ENCODE measurements at regions of chr1 and their contacts with region 1.

Region 1: GRCh38 chr1:205920159-205920558 is 23.1 kb downstream of the SLC26A9 start:
- DNase-seq: peak; percentile 34
- H3K4me3 ChIP-seq: no peak overlapping the region
- H3K27ac ChIP-seq: no peak overlapping the region
- H3K4me1 ChIP-seq: no peaks in the 10 kb centered on the region
- H3K27me3 ChIP-seq: no peaks in the 10 kb centered on the region

Region 2: GRCh38 chr1:205965036-205965884 is 45.1 kb after region 1 on chr1:
- in situ Hi-C with region 1: loop called (anchors 5 kb)
- DNase-seq: no peak
- H3K4me3 ChIP-seq: no peak overlapping the region
- H3K27ac ChIP-seq: no peak overlapping the region
- H3K4me1 ChIP-seq: peaks cover 27% of the 10 kb centered on the region
- H3K27me3 ChIP-seq: no peaks in the 10 kb centered on the region